ENCODE measurements at regions of chr17 and their contacts with region 1.

Region 1: GRCh38 chr17:7329374-7329996 is 350 bp upstream of the NEURL4 start:
- DNase-seq: peak; percentile 92 to 99 (median 96)
- ATAC-seq: peak; percentile 79
- H3K4me3 ChIP-seq: peak overlapping the region; percentile 96 to 100
- H3K4me3 Mint-ChIP-seq: peak overlapping the region; percentile 98
- H3K27ac ChIP-seq: peak overlapping the region; percentile 80 to 95
- H3K27ac Mint-ChIP-seq: peak overlapping the region; percentile 96
- H3K4me1 ChIP-seq: peaks cover 36% of the 10 kb centered on the region
- H3K4me1 Mint-ChIP-seq: peaks cover 37% of the 10 kb centered on the region
- H3K27me3 ChIP-seq: no peaks in the 10 kb centered on the region
- H3K27me3 Mint-ChIP-seq: no peaks in the 10 kb centered on the region
- CTCF ChIP-seq: no peak

Region 2: DNA sequence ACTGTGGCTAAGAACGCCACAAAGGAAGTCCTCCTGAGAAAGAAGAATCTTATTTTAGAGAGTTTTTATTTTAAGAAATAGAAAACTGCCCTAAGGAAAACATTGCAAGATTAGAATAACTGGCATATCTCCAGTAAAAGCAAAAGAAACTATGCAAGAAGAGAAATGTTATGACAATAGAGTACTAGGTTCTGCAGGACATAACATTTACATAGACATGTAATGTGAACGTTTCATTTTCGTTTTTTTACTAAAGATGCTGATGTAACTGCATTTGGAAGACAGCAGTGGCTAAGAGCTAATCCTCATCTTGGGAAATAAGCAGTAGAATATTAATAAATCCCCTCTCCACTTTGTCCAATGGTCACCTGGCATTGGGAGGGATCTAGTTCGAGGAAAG is 207.1 kb before region 1 on chr17:
- CTCF ChIA-PET with region 1: no interaction called
- POLR2A ChIA-PET with region 1: no interaction called
- intact Hi-C with region 1: no loop called
- DNase-seq: no peak
- ATAC-seq: no peak
- H3K4me3 ChIP-seq: no peak overlapping the region
- H3K4me3 Mint-ChIP-seq: no peak overlapping the region
- H3K27ac ChIP-seq: no peak overlapping the region
- H3K27ac Mint-ChIP-seq: no peak overlapping the region
- H3K4me1 ChIP-seq: no peaks in the 10 kb centered on the region
- H3K4me1 Mint-ChIP-seq: no peaks in the 10 kb centered on the region
- H3K27me3 ChIP-seq: peaks cover 0 to 2% of the 10 kb centered on the region in 2 experiments
- H3K27me3 Mint-ChIP-seq: peaks cover 20% of the 10 kb centered on the region
- CTCF ChIP-seq: no peak

Region 3: DNA sequence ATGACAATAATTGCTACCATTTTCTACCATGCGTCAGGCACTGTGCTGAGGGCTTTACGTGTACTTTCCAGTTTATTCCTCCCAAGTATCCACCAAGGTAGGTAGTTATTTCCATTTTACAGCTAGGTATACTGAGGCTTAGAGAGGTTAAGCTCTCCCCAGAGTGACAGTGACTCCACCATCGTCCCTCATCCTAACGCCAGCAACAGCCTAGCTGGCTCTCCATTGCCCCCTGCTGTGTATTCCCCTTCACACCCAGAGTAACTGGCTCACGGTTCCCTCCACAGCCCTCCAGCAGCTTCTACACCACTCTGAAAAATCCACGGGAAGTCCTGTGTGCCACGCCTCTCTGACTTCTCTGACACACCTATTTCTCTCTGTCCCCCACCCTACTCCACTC is 143.2 kb before region 1 on chr17:
- CTCF ChIA-PET with region 1: no interaction called
- POLR2A ChIA-PET with region 1: no interaction called
- intact Hi-C with region 1: no loop called
- DNase-seq: no peak
- ATAC-seq: no peak
- H3K4me3 ChIP-seq: no peak overlapping the region
- H3K4me3 Mint-ChIP-seq: no peak overlapping the region
- H3K27ac ChIP-seq: no peak overlapping the region
- H3K27ac Mint-ChIP-seq: peak overlapping the region; percentile 37
- H3K4me1 ChIP-seq: no peaks in the 10 kb centered on the region
- H3K4me1 Mint-ChIP-seq: no peaks in the 10 kb centered on the region
- H3K27me3 ChIP-seq: no peaks in the 10 kb centered on the region
- H3K27me3 Mint-ChIP-seq: no peaks in the 10 kb centered on the region
- CTCF ChIP-seq: no peak

Region 4: GRCh38 chr17:7314719-7315569 is 14.5 kb before region 1 on chr17 and contains the start of gene GPS2:
- CTCF ChIA-PET with region 1: interaction called, 95 read pairs
- POLR2A ChIA-PET with region 1: interaction called, 20 read pairs
- intact Hi-C with region 1: loop called (anchors 1 kb)
- DNase-seq: peak; percentile 87 to 97 (median 94)
- ATAC-seq: peak; percentile 78
- H3K4me3 ChIP-seq: peak within 1 kb of the TSS; percentile 77 to 82
- H3K4me3 Mint-ChIP-seq: peak within 1 kb of the TSS; percentile 92
- H3K27ac ChIP-seq: peak within 1 kb of the TSS; percentile 81 to 97
- H3K27ac Mint-ChIP-seq: peak within 1 kb of the TSS; percentile 96
- H3K4me1 ChIP-seq: peaks cover 50% of the 10 kb centered on the region
- H3K4me1 Mint-ChIP-seq: peaks cover 51% of the 10 kb centered on the region
- H3K27me3 ChIP-seq: no peaks in the 10 kb centered on the region
- H3K27me3 Mint-ChIP-seq: no peaks in the 10 kb centered on the region
- CTCF ChIP-seq: no peak
- total RNA-seq, gene GPS2: 128 to 132 TPM